Mammary epithelial cell (primary cell): ENCODE measurements at regions of chr15 and their contacts with region 1.

Region 1: DNA sequence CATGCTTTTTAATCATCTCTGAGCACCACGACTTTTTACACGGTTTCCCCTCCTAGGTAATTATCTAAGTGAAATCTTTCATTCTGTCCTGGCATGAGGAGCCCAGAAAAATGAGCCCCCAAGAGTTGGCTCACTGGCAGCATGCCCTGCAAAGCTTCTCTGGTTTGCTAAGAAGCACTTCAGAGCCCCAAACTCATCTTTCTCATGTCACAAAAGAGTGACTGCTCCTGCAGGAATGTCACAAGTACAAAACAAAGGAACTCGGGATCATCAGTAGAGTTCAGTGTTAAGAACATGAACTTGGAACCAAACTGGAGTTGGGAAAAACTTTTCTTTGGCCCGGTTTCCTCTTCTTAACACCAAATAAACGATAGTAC is 123.9 kb downstream of the FOXB1 start:
- DNase-seq: no peak
- H3K4me3 ChIP-seq: peak overlapping the region; percentile 43 to 58 (median 46)
- H3K27ac ChIP-seq: peak overlapping the region; percentile 57
- H3K4me1 ChIP-seq: peaks cover 4% of the 10 kb centered on the region
- H3K27me3 ChIP-seq: no peaks in the 10 kb centered on the region
- CTCF ChIP-seq: no peak

Region 2: GRCh38 chr15:59725172-59725486 is 402.9 kb before region 1 on chr15:
- CTCF ChIA-PET with region 1: interaction called, 17 read pairs
- dilution Hi-C with region 1: no loop called
- in situ Hi-C with region 1: no loop called
- intact Hi-C with region 1: loop called (anchors 2 kb)
- DNase-seq: no peak
- H3K4me3 ChIP-seq: no peak overlapping the region
- H3K27ac ChIP-seq: no peak overlapping the region
- H3K4me1 ChIP-seq: peaks cover 6% of the 10 kb centered on the region
- H3K27me3 ChIP-seq: no peaks in the 10 kb centered on the region
- CTCF ChIP-seq: no peak

Region 3: GRCh38 chr15:59917504-59918157 is 210.4 kb before region 1 on chr15:
- CTCF ChIA-PET with region 1: no interaction called
- dilution Hi-C with region 1: no loop called
- in situ Hi-C with region 1: no loop called
- intact Hi-C with region 1: loop called (anchors 1 kb)
- DNase-seq: peak; percentile 60
- H3K4me3 ChIP-seq: no peak overlapping the region
- H3K27ac ChIP-seq: no peak overlapping the region
- H3K4me1 ChIP-seq: peaks cover 9% of the 10 kb centered on the region
- H3K27me3 ChIP-seq: no peaks in the 10 kb centered on the region
- CTCF ChIP-seq: peak; percentile 74 to 79

Region 4: DNA sequence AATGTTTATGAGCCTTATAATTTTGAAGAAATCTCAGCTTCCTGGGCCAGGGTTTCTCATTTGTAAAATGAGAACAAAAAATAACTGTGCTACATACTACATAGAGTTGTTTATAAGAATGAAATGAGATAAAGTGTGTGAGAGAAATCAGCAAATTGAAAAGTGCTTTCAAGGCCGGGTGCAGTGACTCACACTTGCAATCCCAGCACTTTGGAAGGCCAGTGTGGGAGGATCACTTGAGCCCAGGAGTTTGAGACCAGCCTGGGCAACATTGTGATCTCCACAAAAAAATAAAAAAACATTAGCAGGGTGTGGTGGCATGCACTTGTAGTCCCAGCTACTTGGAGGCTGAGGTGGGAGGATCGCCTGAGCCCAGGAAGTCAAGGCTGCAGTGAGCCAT is 101.4 kb before region 1 on chr15:
- CTCF ChIA-PET with region 1: no interaction called
- dilution Hi-C with region 1: loop called (anchors 5 kb)
- in situ Hi-C with region 1: no loop called
- intact Hi-C with region 1: no loop called
- DNase-seq: no peak
- H3K4me3 ChIP-seq: no peak overlapping the region
- H3K27ac ChIP-seq: no peak overlapping the region
- H3K4me1 ChIP-seq: peaks cover 10% of the 10 kb centered on the region
- H3K27me3 ChIP-seq: no peaks in the 10 kb centered on the region
- CTCF ChIP-seq: no peak

Region 5: GRCh38 chr15:60062826-60063225 is 65.2 kb before region 1 on chr15:
- CTCF ChIA-PET with region 1: no interaction called
- dilution Hi-C with region 1: loop called (anchors 5 kb)
- in situ Hi-C with region 1: no loop called
- intact Hi-C with region 1: no loop called
- DNase-seq: peak; percentile 62
- H3K4me3 ChIP-seq: no peak overlapping the region
- H3K27ac ChIP-seq: no peak overlapping the region
- H3K4me1 ChIP-seq: peaks cover 8% of the 10 kb centered on the region
- H3K27me3 ChIP-seq: no peaks in the 10 kb centered on the region
- CTCF ChIP-seq: no peak